BJ (cell line): ENCODE measurements at regions of chr1 and their contacts with region 1.

Region 1: DNA sequence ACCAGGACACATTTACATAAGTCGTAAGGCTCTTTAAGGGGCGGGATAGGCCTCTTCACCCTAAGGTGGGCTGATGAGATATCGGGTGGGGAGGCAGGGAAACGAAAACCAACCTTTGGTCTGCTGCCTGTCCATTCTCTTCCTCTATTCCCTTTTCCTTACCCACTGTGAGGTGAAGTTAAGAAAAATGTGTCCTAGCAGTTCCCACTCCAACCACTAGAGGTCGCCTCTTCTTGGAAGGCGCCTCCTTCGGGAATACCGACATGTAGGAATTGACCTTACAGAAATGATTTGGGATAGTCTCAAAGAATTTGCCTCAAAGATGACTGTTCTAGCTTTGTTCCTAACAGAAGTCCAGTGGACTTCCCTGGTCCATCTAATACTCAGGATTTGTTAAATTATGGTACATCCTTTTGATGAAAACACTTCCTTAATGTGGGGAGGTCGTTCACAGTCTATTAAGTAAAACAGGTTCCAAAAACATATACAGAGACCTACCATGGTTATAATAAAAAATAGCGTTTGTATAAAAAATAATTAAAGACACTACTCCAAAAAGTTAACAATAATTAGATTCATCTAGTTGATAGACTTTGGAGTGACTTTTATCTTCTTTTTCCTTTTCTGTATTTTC is 14.1 kb downstream of the AZIN2 start:
- DNase-seq: no peak
- H3K4me3 ChIP-seq: no peak overlapping the region
- H3K27me3 ChIP-seq: no peaks in the 10 kb centered on the region
- CTCF ChIP-seq: peak; percentile 96

Region 2: GRCh38 chr1:33080885-33081553 is 14.1 kb before region 1 on chr1 and contains the start of gene AZIN2:
- CTCF ChIA-PET with region 1: interaction called, 23 read pairs
- POLR2A ChIA-PET with region 1: no interaction called
- DNase-seq: peak; percentile 63
- H3K4me3 ChIP-seq: peak within 1 kb of the TSS; percentile 76
- H3K27me3 ChIP-seq: no peaks in the 10 kb centered on the region
- CTCF ChIP-seq: no peak
- polyA plus RNA-seq, gene AZIN2: 3.0 and 6.4 TPM in 2 replicates

Region 3: DNA sequence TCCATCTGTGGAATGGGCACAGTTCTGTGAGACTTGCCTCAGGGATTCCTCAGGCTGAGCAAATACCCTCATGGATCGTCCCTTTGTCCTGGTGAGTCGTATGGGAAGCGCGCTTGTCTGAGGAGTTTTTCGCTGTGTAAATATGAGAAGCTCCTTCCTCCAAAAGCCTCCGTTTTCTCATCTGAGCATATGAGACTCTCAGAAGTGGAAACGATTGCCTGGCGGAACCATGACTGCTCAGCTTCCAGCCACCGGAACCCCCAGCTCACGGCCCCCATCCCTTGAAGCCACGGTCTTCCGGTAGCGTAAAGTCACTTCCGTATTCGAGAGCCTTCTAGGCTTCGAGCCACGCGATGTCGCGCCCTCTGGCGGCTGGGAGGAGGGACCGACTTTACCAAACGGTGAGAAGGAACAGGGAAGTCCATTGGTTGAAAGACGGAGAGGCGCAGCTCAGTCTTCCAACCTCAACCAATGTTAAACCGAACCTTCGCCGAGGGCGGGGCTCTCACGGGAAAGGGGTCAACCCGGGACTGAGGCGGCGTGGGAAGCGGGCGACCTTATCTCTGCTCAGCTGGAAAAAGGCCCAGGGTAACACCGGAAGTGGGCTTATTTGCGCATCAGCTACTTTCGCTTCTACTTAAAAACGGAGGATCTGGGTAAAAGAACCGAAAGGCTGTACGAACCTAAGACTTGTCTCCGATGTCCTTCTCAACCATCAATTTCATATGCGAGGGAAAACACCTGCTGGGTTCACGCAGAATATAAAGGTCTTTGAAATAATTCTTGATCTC is 32.1 kb after region 1 on chr1:
- CTCF ChIA-PET with region 1: interaction called, 23 read pairs
- POLR2A ChIA-PET with region 1: interaction called, 3 read pairs
- DNase-seq: peak; percentile 98
- H3K4me3 ChIP-seq: peak overlapping the region; percentile 62
- H3K27me3 ChIP-seq: no peaks in the 10 kb centered on the region
- CTCF ChIP-seq: peak; percentile 98

Region 4: GRCh38 chr1:33181921-33182341 is 86.8 kb after region 1 on chr1 and contains the start of gene TRIM62:
- CTCF ChIA-PET with region 1: no interaction called
- POLR2A ChIA-PET with region 1: no interaction called
- DNase-seq: peak; percentile 35
- H3K4me3 ChIP-seq: peak within 1 kb of the TSS; percentile 70
- H3K27me3 ChIP-seq: peaks cover 2% of the 10 kb centered on the region; the same call in 1 of the 2 replicates
- CTCF ChIP-seq: no peak
- polyA plus RNA-seq, gene TRIM62: 3.0 and 5.2 TPM in 2 replicates

Region 5: DNA sequence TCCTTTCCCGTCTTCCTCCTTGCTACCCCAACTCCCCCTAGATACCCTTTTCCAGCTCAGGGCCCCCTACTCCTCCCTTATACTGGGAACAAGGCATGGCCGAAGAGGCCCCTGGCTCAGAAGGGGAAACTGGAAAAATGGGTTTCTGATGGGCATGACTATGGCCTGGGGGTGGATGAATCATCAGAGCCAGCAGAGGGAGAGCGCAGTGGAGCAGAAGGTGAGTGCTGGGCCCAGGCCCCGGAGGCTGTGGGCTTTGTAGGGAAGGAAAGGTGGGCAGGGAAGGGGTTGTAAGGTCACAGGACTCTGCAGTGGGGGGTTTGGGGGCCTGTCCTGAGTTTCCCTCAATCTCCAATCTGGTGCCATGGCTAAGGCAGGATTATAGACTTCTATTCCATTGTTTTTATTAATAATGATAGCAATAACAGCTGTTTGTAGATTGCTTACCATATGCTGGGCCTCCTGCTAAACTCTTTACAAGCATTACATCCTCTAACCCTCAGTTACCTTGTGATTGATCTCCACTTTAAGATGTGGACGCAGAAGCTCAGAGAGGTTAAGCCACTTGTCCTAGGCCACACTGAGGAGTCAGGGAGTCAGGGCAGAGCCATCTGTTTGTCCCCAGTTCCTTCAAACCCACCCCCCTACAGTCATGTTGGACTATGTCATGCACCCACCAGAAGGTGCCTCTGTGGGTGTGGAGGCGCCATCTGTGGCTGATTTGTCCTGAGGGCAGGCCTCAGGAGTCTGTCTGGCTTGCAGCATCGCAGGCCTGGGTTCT is 125.0 kb after region 1 on chr1:
- CTCF ChIA-PET with region 1: no interaction called
- POLR2A ChIA-PET with region 1: no interaction called
- DNase-seq: no peak
- H3K4me3 ChIP-seq: no peak overlapping the region
- H3K27me3 ChIP-seq: no peaks in the 10 kb centered on the region
- CTCF ChIP-seq: no peak

Region 6: DNA sequence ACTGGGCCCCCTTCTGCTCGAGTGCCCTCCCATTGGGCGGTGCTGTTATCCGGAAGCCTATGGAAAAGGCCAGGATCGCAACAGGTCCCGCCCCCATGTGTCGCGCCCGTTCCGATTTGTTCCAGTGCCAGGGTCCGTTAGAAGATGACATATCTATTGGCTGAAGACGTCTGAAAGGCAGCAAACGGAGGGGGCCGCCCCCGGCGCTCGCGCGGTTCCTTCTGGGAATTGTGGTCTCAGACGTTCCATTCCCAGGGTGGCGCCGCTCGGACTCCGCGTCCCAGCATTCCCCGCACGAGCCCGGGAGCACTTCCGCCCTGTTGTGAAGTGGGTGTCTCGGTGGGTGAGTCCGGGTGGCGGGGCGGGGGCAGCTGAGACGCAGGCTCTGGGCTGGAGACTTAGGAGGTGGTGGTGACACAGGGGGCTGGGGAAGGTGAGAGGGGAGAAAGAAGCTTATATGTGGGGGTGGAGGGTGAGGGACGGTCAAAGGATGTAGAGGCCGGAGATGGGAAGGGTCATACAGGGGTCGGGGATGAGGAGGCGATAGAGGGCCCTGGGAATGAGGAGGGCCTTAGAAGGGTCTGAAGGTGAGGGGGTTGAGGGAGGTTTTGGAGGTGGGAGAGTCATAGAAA is 377.4 kb after region 1 on chr1 and contains the start of gene ZSCAN20:
- CTCF ChIA-PET with region 1: interaction called, 10 read pairs
- POLR2A ChIA-PET with region 1: no interaction called
- DNase-seq: peak; percentile 94
- H3K4me3 ChIP-seq: peak within 1 kb of the TSS; percentile 66
- H3K27me3 ChIP-seq: no peaks in the 10 kb centered on the region
- CTCF ChIP-seq: no peak
- polyA plus RNA-seq, gene ZSCAN20: 2.9 and 3.4 TPM in 2 replicates